SK-N-SH (cell line): ENCODE measurements at regions of chrX and their contacts with region 1.

Region 1: GRCh38 chrX:100424012-100424411 is 13.9 kb upstream of the PCDH19 start:
- DNase-seq: no peak
- H3K4me3 ChIP-seq: no peak overlapping the region
- H3K27ac ChIP-seq: no peak overlapping the region
- H3K4me1 ChIP-seq: no peaks in the 10 kb centered on the region
- H3K27me3 ChIP-seq: no peaks in the 10 kb centered on the region; the same call in 1 of the 2 replicates
- CTCF ChIP-seq: peak; percentile 32
- EP300 ChIP-seq: no peak
- RAD21 ChIP-seq: no peak; the same call in 1 of the 2 replicates

Region 2: GRCh38 chrX:100413229-100413628 is 10.8 kb before region 1 on chrX:
- CTCF ChIA-PET with region 1: interaction called, 13 read pairs
- POLR2A ChIA-PET with region 1: no interaction called
- DNase-seq: peak; percentile 63
- H3K4me3 ChIP-seq: no peak overlapping the region
- H3K27ac ChIP-seq: no peak overlapping the region
- H3K4me1 ChIP-seq: no peaks in the 10 kb centered on the region; a peak in 1 of 4 replicates
- H3K27me3 ChIP-seq: peaks cover 56% of the 10 kb centered on the region
- CTCF ChIP-seq: peak; percentile 68
- EP300 ChIP-seq: no peak
- RAD21 ChIP-seq: peak; percentile 75